H1 (cell line): ENCODE measurements at regions of chr6 and their contacts with region 1.

Region 1: GRCh38 chr6:142112451-142113061 is 20.2 kb upstream of the GJE1 start:
- DNase-seq: peak in 1 of 2 experiments; percentile 82
- H3K4me3 ChIP-seq: no peak overlapping the region
- H3K27ac ChIP-seq: no peak overlapping the region
- H3K4me1 ChIP-seq: no peaks in the 10 kb centered on the region
- H3K27me3 ChIP-seq: no peaks in the 10 kb centered on the region
- CTCF ChIP-seq: peak in 2 of 3 experiments; percentile 70 to 74; a peak in 3 of 4 replicates
- EP300 ChIP-seq: no peak
- POLR2A ChIP-seq: no peak
- RAD21 ChIP-seq: peak; percentile 91

Region 2: GRCh38 chr6:141677598-141678211 is 434.9 kb before region 1 on chr6:
- CTCF ChIA-PET with region 1: interaction called, 11 read pairs
- POLR2A ChIA-PET with region 1: no interaction called
- DNase-seq: no peak
- H3K4me3 ChIP-seq: no peak overlapping the region
- H3K27ac ChIP-seq: no peak overlapping the region
- H3K4me1 ChIP-seq: no peaks in the 10 kb centered on the region
- H3K27me3 ChIP-seq: no peaks in the 10 kb centered on the region
- CTCF ChIP-seq: peak in 2 of 3 experiments; percentile 50 to 51; a peak in 2 of 4 replicates
- EP300 ChIP-seq: no peak
- POLR2A ChIP-seq: no peak
- RAD21 ChIP-seq: peak; percentile 63

Region 3: GRCh38 chr6:141988954-141989705 is 123.4 kb before region 1 on chr6:
- CTCF ChIA-PET with region 1: interaction called, 25 read pairs
- POLR2A ChIA-PET with region 1: no interaction called
- DNase-seq: peak; percentile 25 to 54
- H3K4me3 ChIP-seq: no peak overlapping the region
- H3K27ac ChIP-seq: no peak overlapping the region
- H3K4me1 ChIP-seq: peaks cover 0 to 10% (median 3%) of the 10 kb centered on the region in 4 experiments; a peak in 3 of 7 replicates
- H3K27me3 ChIP-seq: no peaks in the 10 kb centered on the region
- CTCF ChIP-seq: peak in 2 of 3 experiments; percentile 86; a peak in 3 of 4 replicates
- EP300 ChIP-seq: no peak
- POLR2A ChIP-seq: no peak
- RAD21 ChIP-seq: peak; percentile 90 to 92